ENCODE measurements at regions of chr13 and their contacts with region 1.

Region 1: DNA sequence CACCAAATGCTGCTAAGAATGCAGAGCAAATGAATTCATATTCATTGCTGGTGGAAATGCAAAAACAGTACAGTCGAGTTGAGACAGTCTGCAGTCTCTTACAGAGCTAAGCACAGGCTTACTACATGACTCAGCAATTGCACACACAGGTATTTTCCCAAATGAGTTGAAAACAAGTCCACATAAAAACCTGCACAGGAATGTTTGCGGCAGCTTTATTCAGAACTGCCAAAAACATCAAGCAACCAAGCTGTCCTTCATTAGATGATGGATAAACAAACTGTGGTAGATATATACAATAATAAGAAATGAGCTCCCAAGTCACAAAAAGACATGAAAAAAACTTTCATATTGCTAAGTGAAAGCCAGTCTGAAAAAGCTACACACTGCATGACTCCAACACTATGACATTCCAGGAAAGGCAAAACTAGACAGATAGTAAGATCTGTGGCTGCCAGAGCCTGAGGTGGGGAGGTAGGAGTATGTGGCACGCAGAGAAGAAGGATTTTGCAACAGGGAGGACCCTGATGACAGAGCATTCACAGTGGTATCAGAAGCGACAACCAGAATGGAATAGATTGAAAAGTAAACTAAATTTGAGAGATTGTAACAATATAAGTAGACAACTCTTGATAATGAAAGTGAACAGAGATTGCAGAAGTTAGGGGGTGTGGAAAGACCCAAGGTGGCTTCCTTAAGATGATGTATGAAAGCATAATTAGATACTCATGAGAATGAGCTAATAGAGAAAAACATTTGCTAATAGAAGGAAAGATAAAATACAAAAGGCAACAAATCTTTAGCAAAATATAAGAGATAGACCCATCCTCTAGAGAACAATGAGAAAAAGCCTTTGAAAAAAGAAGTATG is 52.7 kb downstream of the TSC22D1 start:
- DNase-seq: no peak
- ATAC-seq: peak in 1 of 8 donors; percentile 41
- H3K4me3 ChIP-seq: no peak overlapping the region
- H3K27ac ChIP-seq: no peak overlapping the region
- H3K4me1 ChIP-seq: peaks cover 0 to 24% (median 10%) of the 10 kb centered on the region in 9 donors
- H3K27me3 ChIP-seq: no peaks in the 10 kb centered on the region
- CTCF ChIP-seq: no peak

Region 2: DNA sequence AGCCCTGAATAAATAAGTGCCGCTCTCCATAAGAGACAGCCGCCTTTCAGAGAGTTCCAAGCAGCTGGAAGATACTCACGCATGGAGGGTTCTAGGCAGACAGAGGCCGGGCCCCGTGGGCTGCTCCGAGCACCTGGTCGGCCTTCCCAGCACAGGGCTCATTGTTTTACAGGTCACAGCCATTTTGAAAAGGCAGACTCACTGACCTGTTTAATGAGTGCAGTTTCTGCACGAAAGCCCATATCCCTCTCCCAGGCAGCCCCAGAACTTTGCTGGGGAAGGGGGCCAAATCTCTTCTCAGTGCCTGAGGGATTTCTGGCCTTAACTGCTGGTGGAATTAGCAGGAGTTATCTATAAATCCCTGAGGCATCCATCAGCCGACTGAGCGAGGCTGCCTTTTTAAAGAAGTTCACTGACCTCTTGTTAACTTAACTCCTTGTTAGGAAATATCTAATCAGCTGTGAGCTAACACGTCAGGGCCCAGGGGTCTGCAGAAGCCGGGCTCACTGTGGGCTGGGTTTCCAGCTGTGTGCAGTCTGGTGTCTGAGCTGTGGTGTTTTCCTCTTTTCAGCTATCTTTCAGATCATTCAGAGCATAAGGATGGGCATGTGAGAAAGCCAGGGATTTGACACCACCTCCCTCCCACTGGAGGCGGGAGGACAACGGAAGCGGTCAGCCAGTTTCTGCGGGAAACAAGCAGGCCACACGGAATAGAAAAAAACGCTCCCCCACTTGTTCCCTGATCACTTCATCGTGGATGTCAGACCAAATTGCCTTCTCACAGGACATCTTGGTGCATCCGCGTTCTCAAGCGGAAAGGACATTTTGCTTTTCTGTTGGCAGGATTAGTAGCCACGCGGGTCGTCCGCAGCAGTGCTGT is 126.4 kb before region 1 on chr13:
- intact Hi-C with region 1: no loop called
- DNase-seq: peak; percentile 38 to 51
- ATAC-seq: peak; percentile 58 to 89 (median 76)
- H3K4me3 ChIP-seq: peak overlapping the region in 5 of 10 donors; percentile 13 to 33 (median 18)
- H3K27ac ChIP-seq: peak overlapping the region in 8 of 10 donors; percentile 3 to 72 (median 47)
- H3K4me1 ChIP-seq: peaks cover 0 to 15% (median 6%) of the 10 kb centered on the region in 9 donors
- H3K27me3 ChIP-seq: no peaks in the 10 kb centered on the region
- CTCF ChIP-seq: no peak

Region 3: DNA sequence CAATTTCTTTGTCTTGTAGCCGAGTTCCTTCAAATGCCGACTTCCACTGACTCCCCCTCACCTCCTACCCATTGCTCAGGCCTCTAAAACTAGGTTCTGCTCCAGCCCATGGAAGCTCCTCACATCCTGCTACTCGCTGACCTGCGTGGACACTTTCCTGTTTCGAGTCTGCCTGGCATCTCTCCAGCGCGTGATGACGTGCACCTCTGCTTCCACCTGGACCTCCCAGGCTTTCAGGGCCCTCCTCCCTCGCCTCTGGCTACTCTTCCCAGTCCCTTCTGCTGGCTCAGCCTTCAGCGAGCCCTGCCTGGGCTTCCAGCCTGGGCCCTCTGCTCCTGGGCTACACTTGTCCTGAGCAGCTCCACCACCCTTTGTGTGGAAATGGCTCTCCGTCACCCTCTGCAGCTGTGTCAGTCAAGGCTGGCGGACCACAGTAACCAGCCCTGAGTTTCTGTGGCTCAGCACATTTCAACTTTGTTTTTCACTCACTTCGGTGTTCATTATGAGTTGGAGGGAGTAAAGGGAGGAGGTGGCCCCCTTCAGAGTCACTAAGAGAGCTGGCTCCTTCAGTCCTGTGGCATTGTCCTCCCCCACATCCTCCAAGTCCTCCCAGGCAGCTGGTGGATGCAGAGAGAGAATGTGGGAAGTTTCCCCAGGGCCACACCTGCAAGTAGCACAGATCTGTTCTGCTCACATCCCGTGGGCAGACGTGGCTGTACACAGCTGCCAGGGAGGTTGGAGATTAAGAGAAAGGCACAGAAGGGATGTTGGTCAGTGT is 100.4 kb before region 1 on chr13:
- intact Hi-C with region 1: no loop called
- DNase-seq: peak; percentile 34 to 72
- ATAC-seq: peak; percentile 30 to 92 (median 72)
- H3K4me3 ChIP-seq: no peak overlapping the region
- H3K27ac ChIP-seq: peak overlapping the region in 5 of 10 donors; percentile 26 to 47 (median 38)
- H3K4me1 ChIP-seq: peaks cover 0 to 18% (median 6%) of the 10 kb centered on the region in 9 donors
- H3K27me3 ChIP-seq: no peaks in the 10 kb centered on the region
- CTCF ChIP-seq: no peak

Region 4: DNA sequence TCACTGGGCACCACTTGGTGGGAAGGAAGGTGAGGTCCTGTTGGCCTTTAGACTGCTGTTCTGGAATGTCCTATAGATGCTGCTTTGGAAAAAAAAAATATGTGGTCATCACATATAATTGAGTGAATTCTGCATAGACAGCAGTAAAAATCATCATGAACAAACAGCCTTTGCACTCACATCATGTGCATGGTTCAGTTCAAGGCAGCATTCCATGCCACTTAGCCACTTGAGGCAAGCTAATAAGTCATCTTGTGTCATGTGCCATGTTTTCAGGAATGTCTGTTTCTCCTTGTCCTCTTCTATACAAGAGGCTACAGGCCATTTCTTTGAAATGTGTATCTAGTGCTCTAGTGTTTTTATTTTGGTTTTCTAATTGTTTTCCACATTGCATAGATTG is 96.7 kb after region 1 on chr13:
- intact Hi-C with region 1: loop called in 1 of 10 experiments (anchors 10 kb)
- DNase-seq: no peak
- ATAC-seq: no peak
- H3K4me3 ChIP-seq: no peak overlapping the region
- H3K27ac ChIP-seq: no peak overlapping the region
- H3K4me1 ChIP-seq: peaks cover 0 to 6% (median 0%) of the 10 kb centered on the region in 9 donors
- H3K27me3 ChIP-seq: no peaks in the 10 kb centered on the region
- CTCF ChIP-seq: no peak

Region 5: GRCh38 chr13:44652962-44653660 is 129.7 kb after region 1 on chr13:
- intact Hi-C with region 1: loop called in 1 of 10 experiments (anchors 10 kb)
- DNase-seq: no peak
- ATAC-seq: no peak
- H3K4me3 ChIP-seq: no peak overlapping the region
- H3K27ac ChIP-seq: no peak overlapping the region
- H3K4me1 ChIP-seq: no peaks in the 10 kb centered on the region
- H3K27me3 ChIP-seq: no peaks in the 10 kb centered on the region
- CTCF ChIP-seq: no peak